ENCODE measurements at regions of chr20 and their contacts with region 1.

Region 1: DNA sequence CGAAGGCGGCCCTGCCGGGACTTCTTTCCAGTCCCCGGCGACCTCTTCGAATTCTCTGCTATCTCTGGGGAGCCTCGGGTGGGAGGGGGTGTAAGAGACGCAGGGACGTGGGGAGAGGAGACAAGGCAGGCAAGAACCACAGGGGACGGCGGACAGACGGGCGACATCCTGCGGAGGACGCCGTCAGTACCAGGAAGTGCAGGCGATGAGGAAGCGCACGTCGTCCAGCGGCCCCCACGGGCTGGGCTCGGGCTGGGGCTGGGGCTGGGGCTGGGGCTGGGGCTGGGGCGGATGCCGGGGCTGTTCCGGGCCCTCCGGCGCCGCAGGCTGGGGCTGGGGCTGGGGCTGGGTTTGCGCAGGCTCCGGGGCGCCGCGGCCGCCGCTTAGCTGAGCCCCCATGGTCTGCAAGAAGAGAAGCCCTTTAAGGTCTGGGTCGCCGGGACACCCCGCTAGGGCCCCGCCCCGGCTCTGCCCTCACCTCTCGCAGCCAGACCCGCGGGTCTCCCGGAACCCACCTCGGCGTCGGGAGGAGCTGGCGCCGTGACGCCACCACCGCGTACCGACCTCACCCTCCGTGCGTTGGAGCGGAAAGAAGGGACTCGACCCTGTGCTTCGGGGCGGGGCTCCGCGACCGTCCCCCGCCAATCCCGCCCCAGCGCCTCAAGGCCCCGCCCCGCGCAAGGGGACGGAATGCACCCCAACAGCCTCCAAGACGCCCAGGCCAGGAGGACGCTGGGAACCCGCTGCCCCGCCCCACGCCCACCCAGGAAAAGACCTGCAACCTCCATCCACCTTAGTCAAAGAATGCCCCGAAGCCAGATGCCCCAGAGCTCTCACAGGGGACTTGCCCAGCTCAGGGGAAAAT is at the start of gene MMP24OS:
- DNase-seq: peak; percentile 78 to 96 (median 89)
- ATAC-seq: peak; percentile 88
- H3K4me3 ChIP-seq: peak within 1 kb of the TSS; percentile 81
- H3K4me3 Mint-ChIP-seq: peak within 1 kb of the TSS; percentile 96
- H3K27ac ChIP-seq: peak within 1 kb of the TSS; percentile 92 to 99
- H3K27ac Mint-ChIP-seq: peak within 1 kb of the TSS; percentile 99
- H3K4me1 ChIP-seq: peaks cover 14% of the 10 kb centered on the region
- H3K4me1 Mint-ChIP-seq: peaks cover 28% of the 10 kb centered on the region
- H3K27me3 ChIP-seq: no peaks in the 10 kb centered on the region
- H3K27me3 Mint-ChIP-seq: no peaks in the 10 kb centered on the region
- CTCF ChIP-seq: no peak
- total RNA-seq, gene MMP24OS: 64.5 to 67.1 TPM

Region 2: DNA sequence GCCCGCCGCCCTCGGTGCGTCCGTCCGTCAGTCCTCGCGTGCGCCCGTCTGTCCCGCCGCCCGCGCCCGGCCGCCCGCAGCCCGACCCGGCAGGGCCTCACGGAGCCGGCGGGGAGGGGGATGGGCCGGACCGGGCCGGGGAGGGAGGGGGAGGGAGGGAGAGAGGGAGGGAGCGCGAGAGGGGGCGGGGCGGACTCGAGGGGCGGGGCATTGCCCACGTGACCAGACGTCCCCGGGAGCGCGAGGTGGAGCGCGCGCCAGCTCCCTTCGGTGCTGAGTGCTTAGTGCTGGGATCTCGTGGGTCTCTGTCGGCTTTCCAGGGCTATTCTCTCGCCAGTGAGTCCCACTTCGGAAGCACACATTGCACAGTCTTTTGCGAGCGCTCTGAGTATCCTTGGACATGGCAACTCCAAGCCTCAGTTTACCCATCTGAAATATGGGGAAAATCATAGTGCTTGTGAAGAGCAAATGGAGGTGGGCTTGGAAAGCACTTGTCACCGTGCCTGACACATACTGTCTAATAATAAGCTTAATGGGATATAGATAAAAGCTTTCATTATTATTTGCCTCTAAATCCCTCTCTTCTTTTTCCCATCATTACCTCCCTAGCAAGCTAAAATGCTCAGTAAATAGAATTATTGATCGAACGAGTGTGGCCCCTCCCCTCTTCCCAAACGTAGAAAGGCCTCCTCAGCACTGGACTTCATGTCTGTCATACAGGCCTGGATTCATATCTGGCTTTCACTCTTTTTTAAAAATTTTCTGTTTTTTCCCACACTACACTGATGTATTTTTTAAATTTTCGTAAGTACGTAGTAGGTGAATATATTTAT is 452.0 kb before region 1 on chr20 and contains the start of gene NCOA6:
- CTCF ChIA-PET with region 1: no interaction called
- POLR2A ChIA-PET with region 1: no interaction called
- intact Hi-C with region 1: loop called in 1 of 2 experiments (anchors 1 kb)
- DNase-seq: peak; percentile 76 to 92 (median 85)
- ATAC-seq: peak; percentile 71
- H3K4me3 ChIP-seq: peak within 1 kb of the TSS; percentile 87 to 89
- H3K4me3 Mint-ChIP-seq: peak within 1 kb of the TSS; percentile 98
- H3K27ac ChIP-seq: peak within 1 kb of the TSS; percentile 38 to 67
- H3K27ac Mint-ChIP-seq: peak within 1 kb of the TSS; percentile 97
- H3K4me1 ChIP-seq: peaks cover 21% of the 10 kb centered on the region
- H3K4me1 Mint-ChIP-seq: peaks cover 41% of the 10 kb centered on the region
- H3K27me3 ChIP-seq: no peaks in the 10 kb centered on the region
- H3K27me3 Mint-ChIP-seq: peaks cover 2% of the 10 kb centered on the region
- CTCF ChIP-seq: no peak
- total RNA-seq, gene NCOA6: 13.0 to 13.5 TPM

Region 3: DNA sequence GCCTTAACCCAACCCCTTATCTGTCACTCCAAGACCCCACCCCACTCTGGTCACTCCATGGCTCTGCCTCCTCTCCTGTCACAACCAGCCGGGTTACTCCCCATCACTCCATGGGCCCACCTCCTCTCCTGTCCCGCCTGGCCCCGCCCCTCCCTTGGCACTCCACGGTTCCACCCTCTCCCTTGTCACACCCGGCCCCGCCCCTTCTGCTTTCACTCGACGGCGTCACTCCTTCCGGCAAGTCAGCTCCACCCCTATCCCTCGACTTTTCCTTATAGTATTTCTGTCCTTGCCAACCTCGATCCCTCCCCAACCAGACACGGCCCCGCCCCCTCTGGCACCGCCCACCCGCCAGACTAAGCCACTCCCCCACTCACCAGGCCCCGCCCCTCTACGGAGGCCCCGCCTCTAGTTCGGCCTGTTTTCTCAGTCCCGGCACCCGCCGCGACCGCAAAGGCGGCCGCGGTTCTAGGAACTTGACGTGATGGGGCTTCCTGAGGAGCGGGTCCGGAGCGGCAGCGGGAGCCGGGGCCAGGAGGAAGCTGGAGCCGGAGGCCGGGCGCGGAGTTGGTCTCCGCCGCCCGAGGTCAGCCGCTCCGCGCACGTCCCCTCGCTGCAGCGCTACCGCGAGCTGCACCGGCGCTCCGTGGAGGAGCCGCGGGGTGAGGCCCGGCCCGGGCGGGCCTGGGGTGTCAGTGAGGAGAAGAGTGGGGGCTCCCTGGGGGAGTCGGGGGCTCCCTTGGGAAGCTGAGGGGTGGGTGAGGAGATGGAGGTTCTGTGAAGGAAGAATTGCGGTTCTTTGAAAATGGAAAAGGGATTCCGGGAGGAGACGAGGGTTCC is 401.4 kb before region 1 on chr20 and contains the start of gene ACSS2:
- CTCF ChIA-PET with region 1: no interaction called
- POLR2A ChIA-PET with region 1: no interaction called
- intact Hi-C with region 1: loop called in 1 of 2 experiments (anchors 5 kb)
- DNase-seq: peak; percentile 85 to 97 (median 91)
- ATAC-seq: peak; percentile 85
- H3K4me3 ChIP-seq: peak within 1 kb of the TSS; percentile 55 to 68
- H3K4me3 Mint-ChIP-seq: peak within 1 kb of the TSS; percentile 89
- H3K27ac ChIP-seq: peak within 1 kb of the TSS in 1 of 2 experiments; percentile 24
- H3K27ac Mint-ChIP-seq: peak within 1 kb of the TSS; percentile 57
- H3K4me1 ChIP-seq: peaks cover 46% of the 10 kb centered on the region
- H3K4me1 Mint-ChIP-seq: peaks cover 54% of the 10 kb centered on the region
- H3K27me3 ChIP-seq: no peaks in the 10 kb centered on the region
- H3K27me3 Mint-ChIP-seq: no peaks in the 10 kb centered on the region
- CTCF ChIP-seq: no peak
- total RNA-seq, gene ACSS2: 6.5 to 12.7 TPM

Region 4: GRCh38 chr20:35039146-35039545 is 238.6 kb before region 1 on chr20:
- CTCF ChIA-PET with region 1: no interaction called
- POLR2A ChIA-PET with region 1: no interaction called
- intact Hi-C with region 1: no loop called
- DNase-seq: no peak
- ATAC-seq: no peak
- H3K4me3 ChIP-seq: no peak overlapping the region
- H3K4me3 Mint-ChIP-seq: no peak overlapping the region
- H3K27ac ChIP-seq: no peak overlapping the region
- H3K27ac Mint-ChIP-seq: peak overlapping the region; percentile 67
- H3K4me1 ChIP-seq: no peaks in the 10 kb centered on the region
- H3K4me1 Mint-ChIP-seq: peaks cover 3% of the 10 kb centered on the region
- H3K27me3 ChIP-seq: no peaks in the 10 kb centered on the region
- H3K27me3 Mint-ChIP-seq: no peaks in the 10 kb centered on the region
- CTCF ChIP-seq: no peak

Region 5: GRCh38 chr20:35226775-35227681 is 50.7 kb before region 1 on chr20:
- CTCF ChIA-PET with region 1: no interaction called
- POLR2A ChIA-PET with region 1: interaction called, 3 read pairs
- intact Hi-C with region 1: loop called in 1 of 2 experiments (anchors 2 kb)
- DNase-seq: peak; percentile 13 to 60 (median 41)
- ATAC-seq: peak; percentile 88
- H3K4me3 ChIP-seq: no peak overlapping the region
- H3K4me3 Mint-ChIP-seq: peak overlapping the region; percentile 78
- H3K27ac ChIP-seq: no peak overlapping the region
- H3K27ac Mint-ChIP-seq: no peak overlapping the region
- H3K4me1 ChIP-seq: peaks cover 3% of the 10 kb centered on the region
- H3K4me1 Mint-ChIP-seq: peaks cover 11% of the 10 kb centered on the region
- H3K27me3 ChIP-seq: peaks cover 8 to 10% of the 10 kb centered on the region in 2 experiments
- H3K27me3 Mint-ChIP-seq: peaks cover 39% of the 10 kb centered on the region
- CTCF ChIP-seq: no peak

Measured in CD8-positive, alpha-beta T cell (primary cell).